ENCODE measurements at regions of chr1 and their contacts with region 1.

Region 1: DNA sequence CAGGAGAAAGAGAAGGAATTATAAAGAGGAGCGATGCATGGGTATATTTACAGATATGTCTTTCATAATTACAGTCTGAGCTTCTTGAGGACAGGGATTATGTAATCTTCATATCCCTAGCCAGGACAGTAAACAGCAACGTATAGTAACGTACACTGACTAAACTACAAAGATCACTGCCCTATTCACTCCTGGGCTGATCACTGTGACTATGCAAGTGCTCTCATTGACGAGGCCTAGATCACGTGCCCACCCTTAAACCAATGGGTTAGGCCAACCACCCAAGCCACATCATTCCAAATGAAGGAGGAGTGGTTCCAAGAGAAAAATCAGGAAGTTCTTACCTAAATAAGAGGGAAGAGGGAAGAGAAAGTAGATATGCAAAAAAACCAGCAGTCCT is 18.5 kb downstream of the PIK3R3 start:
- DNase-seq: no peak
- ATAC-seq: no peak
- H3K4me3 ChIP-seq: no peak overlapping the region
- H3K27ac ChIP-seq: no peak overlapping the region
- H3K4me1 ChIP-seq: peaks cover 0 to 63% (median 24%) of the 10 kb centered on the region in 12 donors
- H3K27me3 ChIP-seq: no peaks in the 10 kb centered on the region
- CTCF ChIP-seq: no peak
- POLR2A ChIP-seq: no peak

Region 2: GRCh38 chr1:45730475-45731339 is 383.2 kb before region 1 on chr1:
- intact Hi-C with region 1: no loop called
- DNase-seq: no peak
- ATAC-seq: no peak
- H3K4me3 ChIP-seq: no peak overlapping the region
- H3K27ac ChIP-seq: no peak overlapping the region
- H3K4me1 ChIP-seq: peaks cover 0 to 7% (median 0%) of the 10 kb centered on the region in 12 donors
- H3K27me3 ChIP-seq: no peaks in the 10 kb centered on the region
- CTCF ChIP-seq: no peak
- POLR2A ChIP-seq: no peak

Region 3: GRCh38 chr1:46077644-46078043 is 36.3 kb before region 1 on chr1:
- intact Hi-C with region 1: loop called in 1 of 10 experiments (anchors 5 kb)
- DNase-seq: no peak
- ATAC-seq: no peak
- H3K4me3 ChIP-seq: no peak overlapping the region
- H3K27ac ChIP-seq: no peak overlapping the region
- H3K4me1 ChIP-seq: peaks cover 0 to 12% (median 10%) of the 10 kb centered on the region in 12 donors
- H3K27me3 ChIP-seq: no peaks in the 10 kb centered on the region
- CTCF ChIP-seq: no peak
- POLR2A ChIP-seq: no peak

Measured in heart left ventricle (tissue), 16 donors.